Sciatic nerve (tissue), 2 donors: ENCODE measurements at regions of chr1 and their contacts with region 1.

Region 1: DNA sequence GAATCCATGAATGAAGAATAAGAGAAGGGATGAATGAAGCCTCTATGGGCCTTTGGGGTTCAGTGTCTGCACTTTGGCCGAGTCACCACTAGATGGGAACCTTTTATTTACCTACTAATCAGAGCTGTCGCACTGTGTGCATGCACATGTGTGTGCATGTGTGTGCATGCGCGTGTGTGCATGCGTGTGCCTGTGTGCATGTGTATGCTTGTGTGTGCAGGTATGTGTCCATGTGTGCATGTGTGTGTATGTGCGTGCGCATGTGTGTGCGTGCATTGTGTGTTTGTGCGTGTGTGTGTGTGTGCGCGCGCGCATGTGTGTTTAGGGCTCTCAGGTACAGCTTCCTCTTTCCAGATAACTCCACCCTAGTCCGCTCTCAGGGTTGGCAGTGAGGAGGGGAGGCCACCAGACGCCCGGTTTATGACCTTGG is 20.4 kb upstream of the UBXN10 start:
- DNase-seq: no peak
- ATAC-seq: peak; percentile 16

Region 2: GRCh38 chr1:19723834-19724233 is 441.7 kb before region 1 on chr1:
- intact Hi-C with region 1: loop called (anchors 5 kb)
- DNase-seq: no peak
- ATAC-seq: no peak

Region 3: DNA sequence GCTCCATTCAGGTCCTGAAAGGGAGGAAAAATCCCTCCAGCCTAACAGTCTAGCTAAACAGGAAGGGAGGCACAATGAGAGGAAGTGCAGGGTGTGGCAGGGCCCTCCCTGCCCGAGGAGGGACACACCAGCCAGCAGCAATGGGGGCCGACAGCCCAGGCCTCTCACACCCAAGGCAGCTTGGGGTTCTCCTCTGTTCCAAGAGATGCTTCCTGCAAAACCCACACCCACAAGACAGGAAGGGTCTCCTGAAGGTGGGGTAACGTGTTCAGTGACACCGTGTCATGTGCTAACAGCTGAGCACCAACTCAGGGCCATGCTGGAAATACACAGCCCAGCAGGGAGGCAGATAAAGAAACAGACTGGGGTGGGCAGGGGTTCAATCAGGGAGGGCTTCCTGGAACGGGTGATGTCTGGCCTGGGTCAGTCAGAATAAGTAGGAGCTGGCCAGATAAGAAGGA is 1114.5 kb after region 1 on chr1:
- intact Hi-C with region 1: no loop called
- DNase-seq: no peak
- ATAC-seq: peak; percentile 23